ENCODE measurements at regions of chr1 and their contacts with region 1.

Region 1: GRCh38 chr1:164914208-164914607 is 355.2 kb downstream of the PBX1 start:
- DNase-seq: no peak

Region 2: GRCh38 chr1:164440232-164440631 is 474.0 kb before region 1 on chr1:
- intact Hi-C with region 1: loop called (anchors 10 kb)
- DNase-seq: peak; percentile 76

Region 3: GRCh38 chr1:164617377-164618201 is 296.6 kb before region 1 on chr1:
- intact Hi-C with region 1: loop called (anchors 10 kb)
- DNase-seq: no peak

Region 4: DNA sequence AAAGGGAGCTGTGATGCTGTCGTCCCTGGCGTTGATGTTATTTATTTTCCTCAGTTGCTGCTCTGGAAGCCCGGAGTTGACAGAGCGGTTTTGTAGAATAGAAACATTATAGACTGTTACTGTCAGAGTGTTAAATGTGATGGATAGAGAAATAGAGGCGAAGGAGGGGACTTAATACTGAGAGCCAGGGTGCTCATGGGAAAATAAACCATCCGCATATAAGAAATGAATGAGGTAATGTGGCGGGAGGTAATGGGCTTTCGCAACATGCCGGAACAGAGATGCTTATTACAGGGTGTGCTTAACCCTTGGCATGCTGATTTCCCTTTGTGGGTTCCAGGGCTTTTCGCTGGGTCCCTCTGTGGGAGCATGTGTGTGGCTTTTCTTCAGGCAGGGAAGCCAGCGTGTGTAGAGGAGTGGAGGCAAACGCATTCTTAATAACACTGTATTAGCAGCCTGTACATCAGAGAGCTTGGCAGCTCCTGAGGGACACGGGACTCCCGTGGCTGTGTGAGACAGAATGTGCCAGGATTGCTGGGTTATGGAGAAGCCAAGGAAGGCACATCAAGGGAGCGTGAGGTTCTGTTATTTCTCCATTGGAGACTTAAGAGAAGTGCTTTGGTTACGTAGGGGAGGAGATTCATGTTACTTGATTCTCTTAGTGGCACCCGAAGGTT is 214.3 kb before region 1 on chr1:
- intact Hi-C with region 1: no loop called
- DNase-seq: no peak

Region 5: DNA sequence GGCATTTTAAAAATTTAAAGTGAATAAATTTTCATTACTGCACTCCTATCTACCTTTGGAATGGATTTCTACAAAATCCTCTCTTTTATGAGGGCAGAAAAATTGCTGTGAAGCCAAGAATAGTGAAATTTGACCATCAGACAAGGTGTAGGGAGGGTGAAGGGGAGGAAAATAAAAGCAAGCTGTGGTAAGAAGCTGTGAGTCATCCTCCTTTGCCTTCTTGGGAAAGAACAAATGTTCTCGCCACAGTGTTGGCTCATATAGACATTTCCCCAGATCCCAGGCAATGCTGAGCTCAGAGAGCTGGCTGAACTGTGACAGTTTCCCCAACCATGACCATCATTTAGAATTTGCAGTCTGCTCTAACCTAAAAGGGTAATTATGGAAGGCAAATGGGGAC is 119.9 kb before region 1 on chr1:
- intact Hi-C with region 1: loop called (anchors 5 kb)
- DNase-seq: no peak

Region 6: GRCh38 chr1:164823486-164824279 is 90.5 kb before region 1 on chr1:
- intact Hi-C with region 1: loop called (anchors 5 kb)
- DNase-seq: no peak

Region 7: DNA sequence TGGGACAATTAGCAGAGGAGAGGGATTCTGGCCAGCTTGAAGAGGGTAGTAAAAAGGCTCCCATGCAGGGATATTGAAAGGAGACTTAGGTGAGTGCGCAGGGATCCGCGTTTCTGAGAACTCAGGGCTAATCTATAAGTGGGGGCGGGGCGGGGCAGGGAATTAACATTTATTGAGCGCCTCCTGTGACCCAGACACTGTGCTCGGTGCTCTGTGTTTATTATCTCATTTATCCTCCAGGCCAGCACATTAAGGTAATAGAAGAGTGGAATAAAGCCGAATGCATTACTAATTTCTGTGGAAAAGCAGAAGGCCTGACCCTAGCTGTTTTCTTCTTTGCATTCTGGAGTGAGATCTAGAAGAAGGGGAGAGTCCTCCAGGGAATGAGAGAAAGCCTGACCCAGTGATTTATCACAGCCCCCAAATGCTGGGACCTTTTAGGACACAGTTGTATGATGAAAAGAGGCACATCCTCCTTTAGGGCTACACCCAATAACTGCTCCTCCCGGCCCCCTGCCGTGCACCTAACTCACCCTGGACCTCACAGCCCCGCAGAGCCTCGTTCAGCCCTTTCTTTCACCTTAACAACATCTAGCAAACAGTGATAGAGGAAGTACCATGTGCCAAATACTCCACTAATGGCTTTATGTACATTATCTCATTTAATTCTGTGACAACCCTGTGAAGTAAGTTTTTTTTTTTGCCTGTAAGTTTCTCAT is 37.7 kb before region 1 on chr1:
- intact Hi-C with region 1: no loop called
- DNase-seq: no peak

Region 8: GRCh38 chr1:165050235-165050634 is 136.0 kb after region 1 on chr1:
- intact Hi-C with region 1: no loop called
- DNase-seq: no peak

Measured in cardiac septum (tissue), 1 donor.